PC-9 (cell line): ENCODE measurements at regions of chr7 and their contacts with region 1.

Region 1: DNA sequence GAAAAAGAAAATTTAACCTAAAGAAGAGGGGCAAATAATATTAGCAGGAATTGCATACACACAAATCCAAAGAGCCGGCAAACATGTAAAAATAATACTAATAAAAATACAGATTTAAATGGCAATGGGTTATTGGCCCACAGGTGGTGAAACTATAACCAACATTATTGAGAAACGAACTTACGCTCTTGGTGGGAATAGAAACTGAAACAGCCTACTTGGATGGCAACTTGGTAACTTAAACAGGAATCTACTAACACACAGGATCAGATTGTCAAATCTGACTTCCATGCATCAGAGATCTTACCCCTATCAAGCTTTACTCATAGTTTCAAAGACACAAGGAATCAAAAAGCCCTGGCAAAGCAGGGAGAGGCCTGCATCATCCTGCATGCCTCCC is 66.5 kb downstream of the ANLN start:
- DNase-seq: no peak
- H3K4me3 ChIP-seq: no peak overlapping the region
- H3K27ac ChIP-seq: no peak overlapping the region
- H3K4me1 ChIP-seq: no peaks in the 10 kb centered on the region
- H3K27me3 ChIP-seq: no peaks in the 10 kb centered on the region
- CTCF ChIP-seq: no peak

Region 2: GRCh38 chr7:36473454-36474282 is 17.5 kb after region 1 on chr7:
- CTCF ChIA-PET with region 1: no interaction called
- POLR2A ChIA-PET with region 1: interaction called, 11 read pairs
- intact Hi-C with region 1: no loop called
- DNase-seq: peak in 1 of 2 experiments; percentile 50
- H3K4me3 ChIP-seq: no peak overlapping the region
- H3K27ac ChIP-seq: no peak overlapping the region
- H3K4me1 ChIP-seq: no peaks in the 10 kb centered on the region
- H3K27me3 ChIP-seq: no peaks in the 10 kb centered on the region; the same call in 1 of the 2 replicates
- CTCF ChIP-seq: peak; percentile 75

Region 3: GRCh38 chr7:36506820-36507219 is 50.7 kb after region 1 on chr7:
- CTCF ChIA-PET with region 1: no interaction called
- POLR2A ChIA-PET with region 1: no interaction called
- intact Hi-C with region 1: no loop called
- DNase-seq: no peak
- H3K4me3 ChIP-seq: no peak overlapping the region
- H3K27ac ChIP-seq: no peak overlapping the region
- H3K4me1 ChIP-seq: no peaks in the 10 kb centered on the region
- H3K27me3 ChIP-seq: peaks cover 87% of the 10 kb centered on the region
- CTCF ChIP-seq: no peak

Region 4: GRCh38 chr7:36597090-36597775 is 141.1 kb after region 1 on chr7:
- CTCF ChIA-PET with region 1: interaction called, 10 read pairs
- POLR2A ChIA-PET with region 1: no interaction called
- intact Hi-C with region 1: no loop called
- DNase-seq: no peak
- H3K4me3 ChIP-seq: no peak overlapping the region
- H3K27ac ChIP-seq: no peak overlapping the region
- H3K4me1 ChIP-seq: no peaks in the 10 kb centered on the region
- H3K27me3 ChIP-seq: peaks cover 35% of the 10 kb centered on the region; the same call in 1 of the 2 replicates
- CTCF ChIP-seq: no peak

Region 5: DNA sequence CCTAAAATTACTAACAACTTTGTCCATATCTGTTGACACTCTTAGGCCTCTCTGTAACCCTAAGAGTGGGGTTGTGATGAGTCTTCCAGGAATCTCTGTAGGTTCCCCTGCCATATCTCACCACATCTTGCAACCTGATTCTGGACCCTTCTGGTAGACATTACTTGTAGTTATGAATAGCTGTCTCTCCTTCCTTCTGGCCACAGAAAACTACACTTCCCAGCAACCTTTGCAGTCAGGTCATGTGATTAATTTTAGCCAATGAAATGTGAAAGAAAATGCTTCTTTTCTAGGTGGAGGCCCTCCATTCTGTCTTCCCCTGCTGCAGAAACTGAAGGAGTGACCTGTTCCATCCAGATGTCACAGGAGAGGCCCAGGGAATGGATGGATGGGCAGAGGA is 415.7 kb after region 1 on chr7:
- CTCF ChIA-PET with region 1: interaction called, 10 read pairs
- POLR2A ChIA-PET with region 1: no interaction called
- intact Hi-C with region 1: no loop called
- DNase-seq: no peak
- H3K4me3 ChIP-seq: no peak overlapping the region
- H3K27ac ChIP-seq: no peak overlapping the region
- H3K4me1 ChIP-seq: no peaks in the 10 kb centered on the region
- H3K27me3 ChIP-seq: peaks cover 22% of the 10 kb centered on the region; the same call in 1 of the 2 replicates
- CTCF ChIP-seq: no peak